Stomach (tissue), 19 donors: ENCODE measurements at regions of chr14 and their contacts with region 1.

Region 1: DNA sequence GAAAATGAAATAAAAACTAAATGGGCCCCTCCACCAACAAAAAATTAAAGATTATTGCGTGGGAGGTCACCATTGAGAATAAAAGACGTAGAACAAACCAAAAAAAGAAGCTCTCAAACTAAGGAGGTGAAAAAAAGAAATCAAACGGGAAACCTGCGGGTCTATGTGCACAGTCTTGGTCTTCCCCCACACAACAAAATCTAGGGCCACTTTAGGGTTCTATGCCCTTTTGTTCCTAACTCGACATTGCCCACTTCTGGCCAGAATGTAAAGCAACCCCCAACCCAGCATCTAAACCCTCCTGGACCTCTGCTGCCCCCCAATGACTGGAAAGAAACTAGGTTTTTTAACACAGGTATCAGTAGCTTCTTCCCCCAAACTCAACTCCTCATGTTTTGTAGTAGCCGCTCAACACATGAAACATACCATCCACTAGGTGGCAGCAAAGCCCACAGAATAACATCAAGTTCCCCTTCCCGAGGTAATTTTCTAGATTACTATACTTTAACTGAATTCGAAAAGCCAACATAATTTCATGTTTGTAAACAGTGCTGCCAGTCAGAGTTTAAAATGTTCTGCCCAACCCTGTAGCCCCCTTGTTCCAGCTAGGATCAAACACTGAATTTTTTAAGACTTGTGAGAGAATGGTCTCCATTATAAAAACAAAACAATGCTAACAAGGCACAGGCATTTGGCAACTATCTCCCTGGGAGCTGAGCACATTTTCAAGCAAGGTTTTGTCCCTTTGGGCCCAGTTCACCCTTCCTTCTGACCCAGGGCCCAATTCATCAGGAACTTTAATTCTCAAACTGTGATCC is 18.7 kb downstream of the DAD1 start:
- DNase-seq: peak; percentile 79 to 95
- H3K4me3 ChIP-seq: no peak overlapping the region
- H3K27ac ChIP-seq: peak overlapping the region; percentile 64 to 91 (median 85)
- H3K4me1 ChIP-seq: peaks cover 38 to 79% (median 56%) of the 10 kb centered on the region in 4 donors
- H3K27me3 ChIP-seq: no peaks in the 10 kb centered on the region
- CTCF ChIP-seq: peak in 5 of 7 experiments; percentile 58 to 98 (median 90)
- EP300 ChIP-seq: no peak
- POLR2A ChIP-seq: no peak

Region 2: GRCh38 chr14:22646570-22647254 is 76.4 kb after region 1 on chr14:
- intact Hi-C with region 1: loop called (anchors 10 kb)
- DNase-seq: no peak
- H3K4me3 ChIP-seq: no peak overlapping the region
- H3K27ac ChIP-seq: no peak overlapping the region
- H3K4me1 ChIP-seq: no peaks in the 10 kb centered on the region
- H3K27me3 ChIP-seq: no peaks in the 10 kb centered on the region
- CTCF ChIP-seq: no peak
- EP300 ChIP-seq: no peak
- POLR2A ChIP-seq: no peak